H1 (cell line): ENCODE measurements at regions of chr15 and their contacts with region 1.

Region 1: DNA sequence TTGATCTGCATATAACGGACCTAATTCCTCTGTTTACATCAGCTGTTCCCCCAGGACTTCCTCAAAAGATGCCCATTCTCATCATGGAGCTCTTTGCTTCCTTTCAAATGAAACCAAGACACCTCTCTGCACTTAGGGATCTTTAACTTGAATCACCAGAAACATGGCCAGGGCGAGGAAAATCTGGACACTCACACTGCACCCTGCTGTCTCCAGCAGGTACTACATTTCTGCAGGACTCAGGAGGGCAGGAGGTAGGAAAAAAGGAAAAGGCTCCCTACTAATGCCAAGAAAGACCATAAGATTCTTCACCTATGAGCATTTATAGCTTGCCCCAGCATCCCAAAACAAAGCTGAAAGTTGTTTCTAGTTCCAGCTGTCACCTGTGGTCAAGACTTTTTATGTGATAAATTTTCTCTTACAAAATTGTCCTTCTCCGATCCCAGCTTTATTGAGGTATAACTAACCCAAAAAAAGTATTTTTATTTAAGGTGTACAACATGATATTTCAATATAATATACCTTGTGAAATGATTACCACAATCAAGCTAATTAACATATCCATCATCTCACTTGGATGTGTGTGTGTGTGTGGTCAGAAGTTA is 87.3 kb upstream of the C15orf61 start:
- DNase-seq: peak; percentile 7 to 79
- H3K4me3 ChIP-seq: no peak overlapping the region
- H3K27ac ChIP-seq: no peak overlapping the region
- H3K4me1 ChIP-seq: peaks cover 0 to 6% (median 0%) of the 10 kb centered on the region in 4 experiments; a peak in 1 of 7 replicates
- H3K27me3 ChIP-seq: no peaks in the 10 kb centered on the region
- CTCF ChIP-seq: peak; percentile 69 to 80 (median 72)
- EP300 ChIP-seq: no peak
- POLR2A ChIP-seq: no peak
- RAD21 ChIP-seq: peak; percentile 80 to 86

Region 2: DNA sequence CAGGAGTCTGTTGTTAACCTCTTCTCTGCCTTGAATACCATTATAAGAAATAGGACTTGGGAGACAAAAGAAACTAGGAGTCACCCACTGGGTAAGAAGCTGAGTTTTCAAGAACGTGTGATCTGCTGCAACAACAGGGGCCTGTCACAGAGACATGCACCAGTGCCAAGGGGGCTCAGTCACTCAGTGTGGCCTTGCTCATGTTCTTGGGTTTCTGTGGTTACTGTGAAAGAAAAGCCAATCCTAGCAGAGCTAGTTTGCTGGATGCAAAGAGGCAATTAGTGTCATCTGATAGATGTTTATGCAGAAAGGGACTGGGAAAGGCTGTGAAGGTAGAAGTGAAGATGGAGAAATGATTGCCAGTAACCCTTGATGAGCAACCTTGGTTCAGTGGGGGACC is 52.7 kb before region 1 on chr15:
- CTCF ChIA-PET with region 1: interaction called, 14 read pairs
- POLR2A ChIA-PET with region 1: no interaction called
- DNase-seq: no peak
- H3K4me3 ChIP-seq: no peak overlapping the region
- H3K27ac ChIP-seq: no peak overlapping the region
- H3K4me1 ChIP-seq: no peaks in the 10 kb centered on the region
- H3K27me3 ChIP-seq: no peaks in the 10 kb centered on the region
- CTCF ChIP-seq: no peak
- EP300 ChIP-seq: no peak
- POLR2A ChIP-seq: no peak
- RAD21 ChIP-seq: no peak

Region 3: DNA sequence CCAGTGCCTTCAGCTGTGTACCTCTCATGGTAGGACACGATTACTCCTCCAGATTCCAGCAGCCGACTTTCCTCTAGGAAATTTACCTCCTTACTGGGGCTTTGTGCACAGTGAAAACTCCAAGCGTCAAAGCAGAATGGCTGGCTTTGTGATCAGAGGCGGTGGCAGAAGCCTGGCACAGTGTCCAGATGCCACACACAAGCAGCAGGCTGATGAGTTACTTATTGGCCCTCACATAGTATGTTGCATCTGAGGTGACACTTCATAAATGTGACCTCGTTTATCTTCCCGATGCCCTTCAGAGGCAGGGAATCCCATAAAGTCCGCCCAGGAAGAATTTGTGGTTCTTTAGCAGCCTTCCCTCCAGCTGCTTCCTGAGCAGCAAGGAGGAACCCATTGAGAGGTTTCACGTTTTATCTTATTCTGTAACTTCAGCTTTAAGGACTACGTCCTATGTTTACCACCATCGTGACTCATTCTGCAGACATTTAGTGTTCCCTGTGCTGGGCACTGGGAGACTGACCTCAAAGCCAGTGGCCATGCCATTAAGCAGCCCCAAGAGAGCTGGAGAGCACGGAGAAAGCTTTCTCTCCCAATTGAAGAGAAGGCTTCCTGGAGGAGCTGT is 19.7 kb before region 1 on chr15:
- CTCF ChIA-PET with region 1: interaction called, 18 read pairs
- POLR2A ChIA-PET with region 1: no interaction called
- DNase-seq: no peak
- H3K4me3 ChIP-seq: no peak overlapping the region
- H3K27ac ChIP-seq: no peak overlapping the region
- H3K4me1 ChIP-seq: peaks cover 1 to 6% (median 6%) of the 10 kb centered on the region in 4 experiments; a peak in 5 of 7 replicates
- H3K27me3 ChIP-seq: no peaks in the 10 kb centered on the region; a peak in 1 of 7 replicates
- CTCF ChIP-seq: no peak
- EP300 ChIP-seq: no peak
- POLR2A ChIP-seq: no peak
- RAD21 ChIP-seq: no peak

Region 4: DNA sequence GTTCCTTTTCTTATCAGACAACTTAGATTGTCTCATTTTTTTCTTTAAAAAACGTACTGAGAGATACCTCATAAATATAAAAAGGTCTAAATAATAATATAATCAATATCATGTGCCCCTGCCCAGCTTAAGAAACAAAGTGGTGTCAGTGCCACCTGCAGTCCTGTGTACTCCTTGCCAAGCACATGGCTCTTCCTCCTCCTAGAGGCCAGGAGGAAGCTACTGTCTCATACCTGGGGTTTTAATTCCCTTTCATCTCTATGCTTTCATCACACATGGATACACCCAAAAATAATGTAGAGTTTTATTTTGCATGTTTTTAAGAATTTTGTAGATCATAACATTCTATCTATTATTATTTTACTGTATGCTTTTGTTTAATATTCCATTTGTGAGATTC is 11.3 kb before region 1 on chr15:
- CTCF ChIA-PET with region 1: interaction called, 29 read pairs
- POLR2A ChIA-PET with region 1: no interaction called
- DNase-seq: no peak
- H3K4me3 ChIP-seq: no peak overlapping the region
- H3K27ac ChIP-seq: no peak overlapping the region
- H3K4me1 ChIP-seq: no peaks in the 10 kb centered on the region
- H3K27me3 ChIP-seq: no peaks in the 10 kb centered on the region; a peak in 1 of 7 replicates
- CTCF ChIP-seq: peak in 2 of 3 experiments; percentile 9 to 14; a peak in 2 of 4 replicates
- EP300 ChIP-seq: no peak
- POLR2A ChIP-seq: no peak
- RAD21 ChIP-seq: peak; percentile 44 to 48

Region 5: DNA sequence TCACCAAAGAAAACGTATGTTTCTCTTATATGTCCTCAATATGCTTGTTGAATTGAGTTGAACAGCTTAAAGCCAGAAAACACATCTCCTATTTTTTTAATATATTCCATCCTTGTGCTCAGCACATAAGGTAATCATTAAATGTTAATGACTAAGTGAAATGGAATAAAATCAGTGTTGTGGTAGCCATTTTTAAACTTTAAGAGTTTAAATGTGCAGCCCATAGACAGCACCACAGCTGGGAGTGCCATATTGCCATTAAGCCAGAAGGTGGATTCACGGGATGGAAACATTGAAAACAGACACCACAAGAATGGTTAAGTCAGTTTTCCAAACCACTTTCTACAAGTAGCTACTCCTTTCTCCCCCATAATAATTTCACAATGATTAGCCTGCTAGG is 10.5 kb after region 1 on chr15:
- CTCF ChIA-PET with region 1: interaction called, 17 read pairs
- POLR2A ChIA-PET with region 1: interaction called, 4 read pairs
- DNase-seq: no peak
- H3K4me3 ChIP-seq: no peak overlapping the region
- H3K27ac ChIP-seq: no peak overlapping the region
- H3K4me1 ChIP-seq: no peaks in the 10 kb centered on the region
- H3K27me3 ChIP-seq: no peaks in the 10 kb centered on the region
- CTCF ChIP-seq: no peak
- EP300 ChIP-seq: no peak
- POLR2A ChIP-seq: no peak
- RAD21 ChIP-seq: no peak

Region 6: GRCh38 chr15:67792250-67792942 is 358.8 kb after region 1 on chr15:
- CTCF ChIA-PET with region 1: no interaction called
- POLR2A ChIA-PET with region 1: no interaction called
- DNase-seq: no peak
- H3K4me3 ChIP-seq: no peak overlapping the region
- H3K27ac ChIP-seq: no peak overlapping the region
- H3K4me1 ChIP-seq: peaks cover 3 to 18% (median 8%) of the 10 kb centered on the region in 4 experiments; a peak in 6 of 7 replicates
- H3K27me3 ChIP-seq: no peaks in the 10 kb centered on the region
- CTCF ChIP-seq: no peak
- EP300 ChIP-seq: no peak
- POLR2A ChIP-seq: no peak
- RAD21 ChIP-seq: no peak